GM12878 (cell line): ENCODE measurements at regions of chr1 and their contacts with region 1.

Region 1: GRCh38 chr1:247431643-247432042 is 15.7 kb downstream of the NLRP3 start:
- DNase-seq: no peak
- ATAC-seq: no peak
- H3K4me3 ChIP-seq: no peak overlapping the region
- H3K27ac ChIP-seq: no peak overlapping the region
- H3K4me1 ChIP-seq: no peaks in the 10 kb centered on the region
- H3K27me3 ChIP-seq: no peaks in the 10 kb centered on the region
- CTCF ChIP-seq: no peak
- EP300 ChIP-seq: no peak
- POLR2A ChIP-seq: no peak
- RAD21 ChIP-seq: no peak

Region 2: DNA sequence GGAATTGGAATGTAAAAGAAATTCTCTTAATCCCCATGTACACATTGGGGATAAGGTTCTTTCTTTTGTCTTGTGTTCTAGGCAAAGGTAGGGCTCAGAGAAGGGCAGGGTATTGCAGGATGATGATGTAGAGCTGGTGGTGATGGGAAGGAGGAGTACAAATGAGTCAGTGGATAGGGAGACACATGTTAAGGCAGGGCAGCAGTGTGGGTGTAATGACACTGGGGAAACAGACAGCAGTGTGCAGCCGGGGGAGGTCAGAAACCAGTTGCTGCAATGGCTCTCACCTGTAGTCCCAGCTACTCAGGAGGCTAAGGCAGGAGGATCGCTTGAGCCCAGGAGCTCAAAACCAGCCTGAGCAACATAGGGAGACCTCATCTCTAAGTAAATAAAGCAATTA is 10.6 kb before region 1 on chr1:
- CTCF ChIA-PET with region 1: interaction called, 35 read pairs
- POLR2A ChIA-PET with region 1: interaction called, 6 read pairs
- RAD21 ChIA-PET with region 1: interaction called, 8 read pairs
- SMC1A ChIA-PET with region 1: interaction called, 47 read pairs
- in situ Hi-C with region 1: no loop called
- intact Hi-C with region 1: loop called (anchors 2 kb)
- DNase-seq: no peak
- ATAC-seq: peak; percentile 70
- H3K4me3 ChIP-seq: no peak overlapping the region
- H3K27ac ChIP-seq: no peak overlapping the region
- H3K4me1 ChIP-seq: peaks cover 5% of the 10 kb centered on the region
- H3K27me3 ChIP-seq: peaks cover 0 to 8% of the 10 kb centered on the region in 2 experiments; a peak in 2 of 4 replicates
- CTCF ChIP-seq: no peak
- EP300 ChIP-seq: no peak
- POLR2A ChIP-seq: no peak
- RAD21 ChIP-seq: no peak